ENCODE measurements at regions of chr1 and their contacts with region 1.

Region 1: GRCh38 chr1:225004396-225004795 is 74.9 kb downstream of the DNAH14 start:
- DNase-seq: no peak
- H3K4me3 ChIP-seq: no peak overlapping the region
- H3K27ac ChIP-seq: no peak overlapping the region
- H3K4me1 ChIP-seq: no peaks in the 10 kb centered on the region
- H3K27me3 ChIP-seq: no peaks in the 10 kb centered on the region
- CTCF ChIP-seq: peak in 2 of 3 experiments; percentile 33 to 38

Region 2: DNA sequence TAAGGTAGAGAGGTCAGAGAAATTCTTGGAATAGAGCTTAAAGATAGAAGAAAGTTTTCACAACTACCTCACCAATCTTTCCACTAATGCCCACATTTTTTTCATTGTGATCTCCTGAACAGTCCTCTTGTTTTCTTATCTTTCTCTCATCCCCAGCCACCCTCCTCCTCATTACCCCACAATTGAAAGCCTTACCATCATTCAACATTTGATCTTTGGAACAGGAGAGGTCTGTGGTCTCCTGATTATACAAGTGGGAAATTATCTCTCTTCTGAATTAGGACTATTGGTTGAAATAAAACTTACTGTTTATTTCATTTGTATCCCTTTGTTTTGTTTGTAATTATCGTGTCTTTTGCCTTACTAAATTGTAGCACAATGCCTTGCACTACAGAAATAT is 45.3 kb before region 1 on chr1:
- dilution Hi-C with region 1: loop called (anchors 5 kb)
- DNase-seq: no peak
- H3K4me3 ChIP-seq: no peak overlapping the region
- H3K27ac ChIP-seq: no peak overlapping the region
- H3K4me1 ChIP-seq: no peaks in the 10 kb centered on the region
- H3K27me3 ChIP-seq: no peaks in the 10 kb centered on the region
- CTCF ChIP-seq: no peak